Activated naive CD4-positive, alpha-beta T cell treated with anti-CD3 and anti-CD28 coated beads for 36 hours (primary cell): ENCODE measurements at regions of chr4 and their contacts with region 1.

Region 1: GRCh38 chr4:40840985-40841571 is 91.3 kb downstream of the NSUN7 start:
- DNase-seq: peak; percentile 93
- H3K4me3 Mint-ChIP-seq: no peak overlapping the region
- H3K27ac Mint-ChIP-seq: peak overlapping the region; percentile 47
- H3K4me1 Mint-ChIP-seq: peaks cover 5% of the 10 kb centered on the region
- H3K27me3 Mint-ChIP-seq: no peaks in the 10 kb centered on the region

Region 2: GRCh38 chr4:40149960-40150385 is 691.1 kb before region 1 on chr4:
- CTCF ChIA-PET with region 1: no interaction called
- intact Hi-C with region 1: loop called (anchors 5 kb)
- DNase-seq: peak; percentile 86
- H3K4me3 Mint-ChIP-seq: no peak overlapping the region
- H3K27ac Mint-ChIP-seq: peak overlapping the region; percentile 70
- H3K4me1 Mint-ChIP-seq: peaks cover 36% of the 10 kb centered on the region
- H3K27me3 Mint-ChIP-seq: no peaks in the 10 kb centered on the region

Region 3: GRCh38 chr4:40462326-40462725 is 378.8 kb before region 1 on chr4:
- CTCF ChIA-PET with region 1: no interaction called
- intact Hi-C with region 1: no loop called
- DNase-seq: peak; percentile 67
- H3K4me3 Mint-ChIP-seq: no peak overlapping the region
- H3K27ac Mint-ChIP-seq: peak overlapping the region; percentile 22
- H3K4me1 Mint-ChIP-seq: peaks cover 17% of the 10 kb centered on the region
- H3K27me3 Mint-ChIP-seq: no peaks in the 10 kb centered on the region

Region 4: DNA sequence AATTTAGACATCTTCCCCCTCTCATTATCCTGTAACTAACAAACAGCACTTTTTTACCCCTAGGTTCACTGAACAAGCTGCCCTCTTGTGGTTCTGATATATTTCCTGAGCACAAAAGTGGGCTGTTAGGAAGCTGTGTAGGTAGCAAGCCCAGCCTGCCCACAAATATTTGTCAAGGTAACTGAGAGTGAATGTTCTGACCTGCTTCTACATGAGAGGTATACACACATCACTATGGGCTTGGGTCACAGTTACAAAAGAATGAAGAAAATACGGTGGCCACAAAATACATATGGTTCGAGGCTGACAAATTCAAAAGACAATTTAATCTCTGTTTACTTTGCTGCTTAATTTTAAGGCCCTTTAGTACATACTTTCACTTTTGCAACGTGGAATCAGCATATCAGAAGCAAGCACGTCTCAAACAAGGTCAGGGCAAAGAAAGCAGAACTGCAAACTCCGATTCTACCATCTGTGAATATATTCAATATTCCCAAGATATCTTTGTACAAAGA is 290.1 kb before region 1 on chr4:
- CTCF ChIA-PET with region 1: interaction called, 3 read pairs
- intact Hi-C with region 1: loop called (anchors 5 kb)
- DNase-seq: peak; percentile 34
- H3K4me3 Mint-ChIP-seq: peak overlapping the region; percentile 60
- H3K27ac Mint-ChIP-seq: peak overlapping the region; percentile 55
- H3K4me1 Mint-ChIP-seq: peaks cover 28% of the 10 kb centered on the region
- H3K27me3 Mint-ChIP-seq: no peaks in the 10 kb centered on the region

Region 5: DNA sequence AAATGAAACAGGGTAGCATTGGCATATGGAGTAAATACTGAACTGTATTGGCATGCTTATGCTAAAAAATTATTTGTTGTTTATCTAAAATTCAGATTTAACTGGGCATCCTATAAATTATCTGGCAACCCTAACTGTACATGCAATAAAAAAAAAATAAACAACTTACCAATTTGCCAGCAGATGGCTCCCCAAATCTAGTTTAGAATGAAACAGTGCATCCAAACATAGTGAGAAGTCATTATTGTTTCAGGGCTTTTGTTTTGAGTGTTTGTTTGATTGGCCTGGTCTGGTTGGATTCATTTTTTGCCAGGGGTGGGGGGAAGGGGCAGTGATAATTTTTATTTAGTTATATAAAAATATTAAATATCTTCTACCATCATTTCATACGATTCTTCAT is 104.2 kb before region 1 on chr4:
- CTCF ChIA-PET with region 1: interaction called, 17 read pairs
- intact Hi-C with region 1: loop called (anchors 1 kb)
- DNase-seq: peak; percentile 18
- H3K4me3 Mint-ChIP-seq: no peak overlapping the region
- H3K27ac Mint-ChIP-seq: no peak overlapping the region
- H3K4me1 Mint-ChIP-seq: peaks cover 9% of the 10 kb centered on the region
- H3K27me3 Mint-ChIP-seq: peaks cover 2% of the 10 kb centered on the region

Region 6: GRCh38 chr4:40856822-40857362 is 15.8 kb after region 1 on chr4:
- CTCF ChIA-PET with region 1: interaction called, 8 read pairs
- intact Hi-C with region 1: loop called (anchors 1 kb)
- DNase-seq: peak; percentile 62
- H3K4me3 Mint-ChIP-seq: peak overlapping the region; percentile 65
- H3K27ac Mint-ChIP-seq: no peak overlapping the region
- H3K4me1 Mint-ChIP-seq: peaks cover 3% of the 10 kb centered on the region
- H3K27me3 Mint-ChIP-seq: peaks cover 50% of the 10 kb centered on the region

Region 7: GRCh38 chr4:40916880-40917279 is 75.8 kb after region 1 on chr4:
- CTCF ChIA-PET with region 1: interaction called, 7 read pairs
- intact Hi-C with region 1: loop called (anchors 2 kb)
- DNase-seq: peak; percentile 79
- H3K4me3 Mint-ChIP-seq: no peak overlapping the region
- H3K27ac Mint-ChIP-seq: no peak overlapping the region
- H3K4me1 Mint-ChIP-seq: peaks cover 31% of the 10 kb centered on the region
- H3K27me3 Mint-ChIP-seq: no peaks in the 10 kb centered on the region

Region 8: DNA sequence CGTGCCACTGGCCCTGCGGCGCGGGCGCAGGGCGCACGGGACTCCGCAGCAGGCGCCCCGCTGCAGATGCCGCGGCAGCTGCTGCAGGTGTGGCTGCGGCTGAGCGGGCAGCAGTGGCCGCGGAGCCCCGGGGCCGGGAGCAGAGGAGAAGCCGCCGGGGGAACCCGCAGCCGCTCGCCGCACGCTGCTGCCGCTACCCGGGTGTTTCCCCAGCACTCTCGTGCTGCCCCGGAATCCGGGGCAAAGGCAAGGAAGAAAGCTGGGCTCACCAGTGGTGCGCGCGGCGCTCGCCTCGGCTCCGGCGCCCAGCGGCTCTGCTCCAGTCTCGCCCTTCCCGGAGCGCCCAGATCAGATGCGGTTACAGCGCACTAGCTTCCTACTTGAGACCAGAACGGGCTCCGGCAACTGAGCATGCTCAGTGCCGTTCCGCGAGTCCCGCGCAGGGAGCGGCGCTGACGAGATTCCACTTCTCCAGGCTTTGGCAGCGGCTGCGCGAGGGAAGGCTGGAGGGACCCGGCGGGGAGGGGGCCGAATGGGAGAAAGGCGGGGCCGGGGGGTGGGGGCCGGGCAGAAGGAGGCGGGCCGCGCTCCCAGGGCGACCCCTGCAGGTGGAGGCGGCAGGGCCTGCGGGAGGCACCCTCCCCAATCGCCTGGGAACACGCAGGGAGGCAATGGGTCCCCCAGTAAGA is 373.2 kb after region 1 on chr4 and contains the start of gene APBB2:
- CTCF ChIA-PET with region 1: no interaction called
- intact Hi-C with region 1: loop called (anchors 10 kb)
- DNase-seq: peak; percentile 66
- H3K4me3 Mint-ChIP-seq: peak within 1 kb of the TSS; percentile 79
- H3K27ac Mint-ChIP-seq: no peak within 1 kb of the TSS
- H3K4me1 Mint-ChIP-seq: peaks cover 22% of the 10 kb centered on the region
- H3K27me3 Mint-ChIP-seq: peaks cover 47% of the 10 kb centered on the region
- total RNA-seq, gene APBB2: 4.5 to 4.8 TPM